Aorta (tissue), 5 donors: ENCODE measurements at regions of chr3 and their contacts with region 1.

Region 1: DNA sequence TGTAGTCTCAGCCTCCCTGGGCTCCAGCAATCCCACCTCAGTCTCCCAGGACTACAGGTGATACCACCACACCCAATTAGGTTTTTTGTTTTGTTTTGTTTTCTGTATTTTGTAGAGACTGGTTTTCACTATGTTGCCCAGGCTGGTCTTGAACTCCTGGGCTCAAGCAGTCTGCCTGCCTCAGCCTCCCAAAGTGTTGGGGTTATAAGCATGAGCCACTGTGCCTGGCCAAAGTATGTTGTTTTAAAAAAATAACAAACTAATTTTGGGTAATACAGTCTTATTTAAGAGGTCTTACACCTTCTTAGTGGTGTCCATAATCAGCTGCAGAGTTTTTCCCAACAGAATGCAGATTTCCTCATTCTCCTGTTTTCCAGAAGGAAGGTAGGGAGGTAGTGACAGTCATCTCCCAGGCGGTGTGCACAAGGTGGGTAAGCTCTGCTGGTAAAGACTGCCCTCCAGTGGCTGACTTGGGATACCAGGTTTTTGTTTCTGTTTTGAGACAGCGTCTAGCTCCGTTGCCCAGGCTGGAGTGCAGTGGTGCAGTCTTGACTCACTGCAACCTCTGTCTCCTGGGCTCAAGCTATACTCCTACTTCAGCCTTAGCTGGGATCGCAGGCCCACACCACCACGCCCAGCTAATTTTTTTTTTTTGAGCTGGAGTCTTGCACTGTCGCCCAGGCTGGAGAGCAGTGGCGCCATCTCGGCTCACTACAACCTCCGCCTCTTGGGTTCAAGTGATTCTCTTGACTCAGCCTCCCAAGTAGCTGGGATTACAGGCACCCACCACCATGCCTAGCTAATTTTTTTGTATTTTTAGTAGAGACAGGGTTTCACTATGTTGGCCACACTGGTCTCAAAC is 58.4 kb downstream of the MAP6D1 start:
- DNase-seq: peak in 1 of 2 donors; percentile 66
- ATAC-seq: peak; percentile 89
- H3K4me3 ChIP-seq: no peak overlapping the region
- H3K27ac ChIP-seq: no peak overlapping the region
- H3K4me1 ChIP-seq: peaks cover 0 to 1% of the 10 kb centered on the region in 2 donors
- H3K27me3 ChIP-seq: no peaks in the 10 kb centered on the region

Region 2: DNA sequence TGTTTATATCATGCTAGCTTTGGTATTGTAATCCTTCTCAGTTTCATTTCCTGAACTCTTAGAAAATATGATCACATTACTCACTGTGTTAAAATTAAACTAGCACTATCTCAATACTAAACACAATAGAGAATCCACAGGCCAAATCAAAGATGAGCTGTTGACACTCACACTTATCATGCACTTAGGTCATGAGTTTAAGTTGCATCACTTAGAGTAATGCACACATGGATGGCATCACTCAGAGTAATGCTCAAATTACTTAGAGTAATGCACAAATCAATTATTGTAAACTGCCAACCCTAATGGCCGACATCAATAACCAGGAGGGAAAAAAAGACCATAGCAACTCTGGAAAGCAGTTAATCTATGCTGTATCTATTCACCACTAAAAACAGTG is 298.6 kb before region 1 on chr3:
- intact Hi-C with region 1: loop called (anchors 2 to 5 kb)
- DNase-seq: no peak
- ATAC-seq: no peak
- H3K4me3 ChIP-seq: no peak overlapping the region
- H3K27ac ChIP-seq: no peak overlapping the region
- H3K4me1 ChIP-seq: no peaks in the 10 kb centered on the region
- H3K27me3 ChIP-seq: no peaks in the 10 kb centered on the region

Region 3: GRCh38 chr3:183878071-183878470 is 111.1 kb after region 1 on chr3:
- intact Hi-C with region 1: no loop called
- DNase-seq: peak in 1 of 2 donors; percentile 60
- ATAC-seq: no peak
- H3K4me3 ChIP-seq: no peak overlapping the region
- H3K27ac ChIP-seq: no peak overlapping the region
- H3K4me1 ChIP-seq: no peaks in the 10 kb centered on the region
- H3K27me3 ChIP-seq: no peaks in the 10 kb centered on the region